ENCODE measurements at regions of chr17 and their contacts with region 1.

Region 1: GRCh38 chr17:78013683-78014467 is 55.4 kb downstream of the TNRC6C start:
- DNase-seq: peak; percentile 45 to 85 (median 54)
- H3K4me3 ChIP-seq: no peak overlapping the region
- H3K27ac ChIP-seq: no peak overlapping the region
- H3K4me1 ChIP-seq: no peaks in the 10 kb centered on the region
- H3K27me3 ChIP-seq: no peaks in the 10 kb centered on the region
- CTCF ChIP-seq: peak; percentile 54 to 86 (median 78)
- POLR2A ChIP-seq: no peak

Region 2: GRCh38 chr17:77542551-77543490 is 471.1 kb before region 1 on chr17:
- intact Hi-C with region 1: loop called (anchors 5 to 10 kb)
- DNase-seq: peak; percentile 65 to 92 (median 83)
- H3K4me3 ChIP-seq: no peak overlapping the region
- H3K27ac ChIP-seq: peak overlapping the region in 2 of 5 donors; percentile 8 to 56
- H3K4me1 ChIP-seq: peaks cover 0 to 8% of the 10 kb centered on the region in 2 donors
- H3K27me3 ChIP-seq: no peaks in the 10 kb centered on the region
- CTCF ChIP-seq: peak; percentile 74 to 88 (median 86)
- POLR2A ChIP-seq: no peak

Region 3: DNA sequence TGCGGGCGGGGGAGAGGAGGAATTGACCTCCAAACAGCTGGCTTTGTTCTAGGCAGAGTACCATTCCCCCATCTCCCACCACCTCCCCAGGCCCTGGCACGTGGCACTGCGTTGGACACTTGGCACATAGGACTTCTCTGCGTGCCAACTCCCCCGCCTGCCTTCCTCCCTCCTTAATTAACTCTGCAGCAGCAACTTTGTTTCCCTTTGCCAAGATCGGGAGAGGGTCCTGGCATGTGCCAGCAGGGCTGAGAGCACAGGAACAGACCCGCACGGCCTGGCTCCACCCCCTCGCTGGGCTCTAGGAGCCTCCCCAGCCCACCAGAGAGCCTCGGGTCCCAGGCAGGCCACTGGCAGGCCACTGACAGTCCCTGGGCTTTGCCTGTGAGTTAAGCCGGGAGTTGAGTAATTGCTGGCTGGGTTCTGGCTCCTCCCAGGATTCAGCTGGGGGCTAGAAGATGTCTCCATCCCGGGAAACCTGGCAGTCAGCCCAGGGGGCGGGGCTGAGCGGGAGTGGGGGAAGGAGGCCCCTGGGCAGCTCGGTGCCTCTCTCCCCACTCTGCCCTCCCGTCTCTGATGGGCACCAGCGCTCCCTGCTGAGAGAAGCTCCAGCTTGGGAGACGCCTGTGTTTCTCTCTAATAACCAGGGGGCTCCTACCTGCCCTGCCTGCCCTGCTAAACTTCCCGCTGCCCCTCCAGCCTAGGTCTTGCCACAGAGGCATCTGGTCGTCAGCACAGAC is 279.4 kb before region 1 on chr17:
- intact Hi-C with region 1: no loop called
- DNase-seq: peak; percentile 51 to 86 (median 65)
- H3K4me3 ChIP-seq: no peak overlapping the region
- H3K27ac ChIP-seq: peak overlapping the region in 2 of 5 donors; percentile 68 to 70
- H3K4me1 ChIP-seq: peaks cover 0 to 17% of the 10 kb centered on the region in 2 donors
- H3K27me3 ChIP-seq: no peaks in the 10 kb centered on the region
- CTCF ChIP-seq: no peak
- POLR2A ChIP-seq: no peak

Region 4: GRCh38 chr17:77963441-77963840 is 50.4 kb before region 1 on chr17:
- intact Hi-C with region 1: loop called in 1 of 2 experiments (anchors 10 kb)
- DNase-seq: peak; percentile 59 to 83 (median 75)
- H3K4me3 ChIP-seq: no peak overlapping the region
- H3K27ac ChIP-seq: no peak overlapping the region
- H3K4me1 ChIP-seq: peaks cover 10 to 35% of the 10 kb centered on the region in 2 donors
- H3K27me3 ChIP-seq: no peaks in the 10 kb centered on the region
- CTCF ChIP-seq: no peak
- POLR2A ChIP-seq: no peak